GM23248 (cell line): ENCODE measurements at regions of chr12 and their contacts with region 1.

Region 1: GRCh38 chr12:122642009-122642408 is 61.1 kb downstream of the HCAR2 start:
- DNase-seq: peak; percentile 43
- H3K4me3 ChIP-seq: no peak overlapping the region
- H3K27ac ChIP-seq: no peak overlapping the region
- H3K4me1 ChIP-seq: peaks cover 6% of the 10 kb centered on the region
- H3K27me3 ChIP-seq: no peaks in the 10 kb centered on the region

Region 2: GRCh38 chr12:122545855-122546254 is 96.2 kb before region 1 on chr12:
- in situ Hi-C with region 1: no loop called
- DNase-seq: no peak
- H3K4me3 ChIP-seq: no peak overlapping the region
- H3K27ac ChIP-seq: no peak overlapping the region
- H3K4me1 ChIP-seq: no peaks in the 10 kb centered on the region
- H3K27me3 ChIP-seq: no peaks in the 10 kb centered on the region

Region 3: GRCh38 chr12:122749569-122750373 is 107.8 kb after region 1 on chr12:
- in situ Hi-C with region 1: loop called (anchors 5 kb)
- DNase-seq: no peak
- H3K4me3 ChIP-seq: no peak overlapping the region
- H3K27ac ChIP-seq: no peak overlapping the region
- H3K4me1 ChIP-seq: peaks cover 8% of the 10 kb centered on the region; the same call in 1 of the 2 replicates
- H3K27me3 ChIP-seq: no peaks in the 10 kb centered on the region

Region 4: GRCh38 chr12:122888232-122888867 is 246.3 kb after region 1 on chr12:
- in situ Hi-C with region 1: no loop called
- DNase-seq: peak; percentile 56
- H3K4me3 ChIP-seq: peak overlapping the region; percentile 11; the same call in 1 of the 2 replicates
- H3K27ac ChIP-seq: peak overlapping the region; percentile 54
- H3K4me1 ChIP-seq: peaks cover 66% of the 10 kb centered on the region
- H3K27me3 ChIP-seq: no peaks in the 10 kb centered on the region

Region 5: DNA sequence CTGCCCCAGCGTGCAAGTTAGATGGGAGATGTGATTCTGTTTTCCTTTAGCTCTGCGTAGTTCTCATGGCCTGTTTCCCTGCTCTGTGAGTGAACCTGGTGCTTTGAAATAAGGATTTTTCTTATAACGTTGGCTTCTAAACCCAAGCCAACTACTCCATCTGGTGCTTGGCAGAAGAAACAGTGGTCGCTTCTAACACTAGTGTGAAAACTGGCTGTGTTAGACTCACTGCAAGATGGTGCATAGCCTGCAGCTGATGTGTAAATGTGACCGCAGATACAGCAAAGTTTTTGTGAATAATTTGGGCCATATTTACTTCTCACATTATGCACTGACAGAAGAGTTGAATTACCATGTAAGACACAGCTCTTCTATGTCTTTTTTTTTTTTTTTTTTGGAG is 1003.9 kb after region 1 on chr12:
- in situ Hi-C with region 1: no loop called
- DNase-seq: no peak
- H3K4me3 ChIP-seq: no peak overlapping the region
- H3K27ac ChIP-seq: no peak overlapping the region
- H3K4me1 ChIP-seq: no peaks in the 10 kb centered on the region
- H3K27me3 ChIP-seq: no peaks in the 10 kb centered on the region